ENCODE measurements at regions of chr14 and their contacts with region 1.

Region 1: GRCh38 chr14:100285021-100285912 is 21.0 kb downstream of the SLC25A29 start:
- DNase-seq: peak; percentile 71 to 92 (median 79)
- ATAC-seq: peak; percentile 97
- H3K4me3 ChIP-seq: peak overlapping the region; percentile 71
- H3K4me3 Mint-ChIP-seq: peak overlapping the region; percentile 27 to 91 (median 73)
- H3K27ac ChIP-seq: peak overlapping the region; percentile 85
- H3K27ac Mint-ChIP-seq: peak overlapping the region in 5 of 9 donors; percentile 9 to 87 (median 59)
- H3K4me1 ChIP-seq: peaks cover 0 to 6% of the 10 kb centered on the region in 2 donors
- H3K4me1 Mint-ChIP-seq: peaks cover 2 to 21% (median 8%) of the 10 kb centered on the region in 7 donors
- H3K27me3 ChIP-seq: no peaks in the 10 kb centered on the region
- H3K27me3 Mint-ChIP-seq: no peaks in the 10 kb centered on the region

Region 2: GRCh38 chr14:100213956-100214774 is 71.1 kb before region 1 on chr14:
- CTCF ChIA-PET with region 1: no interaction called
- POLR2A ChIA-PET with region 1: interaction called, 3 read pairs
- intact Hi-C with region 1: loop called in 1 of 2 experiments (anchors 1 kb)
- DNase-seq: peak; percentile 82 to 95 (median 90)
- ATAC-seq: peak; percentile 98
- H3K4me3 ChIP-seq: peak overlapping the region; percentile 90
- H3K4me3 Mint-ChIP-seq: peak overlapping the region; percentile 76 to 89 (median 85)
- H3K27ac ChIP-seq: peak overlapping the region; percentile 97
- H3K27ac Mint-ChIP-seq: peak overlapping the region; percentile 62 to 94 (median 92)
- H3K4me1 ChIP-seq: peaks cover 12 to 19% of the 10 kb centered on the region in 2 donors
- H3K4me1 Mint-ChIP-seq: peaks cover 10 to 39% (median 34%) of the 10 kb centered on the region in 7 donors
- H3K27me3 ChIP-seq: no peaks in the 10 kb centered on the region
- H3K27me3 Mint-ChIP-seq: no peaks in the 10 kb centered on the region

Region 3: GRCh38 chr14:100221533-100222223 is 63.6 kb before region 1 on chr14:
- CTCF ChIA-PET with region 1: interaction called, 3 read pairs
- POLR2A ChIA-PET with region 1: interaction called, 11 read pairs
- intact Hi-C with region 1: no loop called
- DNase-seq: peak; percentile 22 to 81 (median 74)
- ATAC-seq: peak; percentile 95
- H3K4me3 ChIP-seq: peak overlapping the region; percentile 88
- H3K4me3 Mint-ChIP-seq: no peak overlapping the region
- H3K27ac ChIP-seq: peak overlapping the region; percentile 77
- H3K27ac Mint-ChIP-seq: no peak overlapping the region
- H3K4me1 ChIP-seq: peaks cover 31 to 36% of the 10 kb centered on the region in 2 donors
- H3K4me1 Mint-ChIP-seq: peaks cover 11 to 20% (median 13%) of the 10 kb centered on the region in 7 donors
- H3K27me3 ChIP-seq: no peaks in the 10 kb centered on the region
- H3K27me3 Mint-ChIP-seq: no peaks in the 10 kb centered on the region

Region 4: DNA sequence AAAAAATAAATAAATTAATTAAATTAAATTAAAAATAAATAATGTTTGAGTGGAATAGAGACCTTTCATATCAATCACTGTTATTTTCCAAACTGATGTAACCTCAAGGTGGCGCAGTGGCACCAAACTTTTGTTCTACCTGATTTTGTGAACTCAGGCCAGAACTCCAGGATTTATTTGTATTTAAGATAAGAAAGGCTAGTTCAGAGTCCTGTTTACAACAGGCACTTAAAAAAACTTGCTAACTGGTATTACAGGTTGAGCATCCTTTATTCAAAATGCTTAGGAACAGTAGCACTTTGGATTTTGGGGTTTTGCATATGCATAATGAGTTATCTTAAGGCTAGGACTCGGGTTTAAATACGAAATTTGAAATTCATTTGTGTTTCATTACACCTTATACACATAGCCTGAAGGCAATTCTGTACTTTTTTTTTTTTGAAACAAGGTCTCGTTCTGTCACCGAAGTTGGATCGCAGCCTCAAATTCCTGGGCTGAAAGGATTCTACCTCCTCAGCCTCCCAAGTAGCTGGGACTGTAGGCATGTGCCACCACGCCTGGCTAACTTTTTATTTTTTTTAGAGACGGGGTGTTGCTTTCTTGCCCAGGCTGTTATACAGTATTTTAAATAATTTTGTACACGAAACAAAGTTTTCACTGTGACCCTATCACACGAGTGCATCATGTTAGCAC is 13.9 kb before region 1 on chr14:
- CTCF ChIA-PET with region 1: interaction called, 11 read pairs
- POLR2A ChIA-PET with region 1: interaction called, 4 read pairs
- intact Hi-C with region 1: loop called in 1 of 2 experiments (anchors 2 kb)
- DNase-seq: peak in 2 of 9 donors; percentile 22
- ATAC-seq: peak; percentile 32
- H3K4me3 ChIP-seq: no peak overlapping the region
- H3K4me3 Mint-ChIP-seq: no peak overlapping the region
- H3K27ac ChIP-seq: no peak overlapping the region
- H3K27ac Mint-ChIP-seq: peak overlapping the region in 1 of 9 donors; percentile 59
- H3K4me1 ChIP-seq: peaks cover 21 to 34% of the 10 kb centered on the region in 2 donors
- H3K4me1 Mint-ChIP-seq: peaks cover 28 to 81% (median 70%) of the 10 kb centered on the region in 7 donors
- H3K27me3 ChIP-seq: no peaks in the 10 kb centered on the region
- H3K27me3 Mint-ChIP-seq: no peaks in the 10 kb centered on the region

Region 5: DNA sequence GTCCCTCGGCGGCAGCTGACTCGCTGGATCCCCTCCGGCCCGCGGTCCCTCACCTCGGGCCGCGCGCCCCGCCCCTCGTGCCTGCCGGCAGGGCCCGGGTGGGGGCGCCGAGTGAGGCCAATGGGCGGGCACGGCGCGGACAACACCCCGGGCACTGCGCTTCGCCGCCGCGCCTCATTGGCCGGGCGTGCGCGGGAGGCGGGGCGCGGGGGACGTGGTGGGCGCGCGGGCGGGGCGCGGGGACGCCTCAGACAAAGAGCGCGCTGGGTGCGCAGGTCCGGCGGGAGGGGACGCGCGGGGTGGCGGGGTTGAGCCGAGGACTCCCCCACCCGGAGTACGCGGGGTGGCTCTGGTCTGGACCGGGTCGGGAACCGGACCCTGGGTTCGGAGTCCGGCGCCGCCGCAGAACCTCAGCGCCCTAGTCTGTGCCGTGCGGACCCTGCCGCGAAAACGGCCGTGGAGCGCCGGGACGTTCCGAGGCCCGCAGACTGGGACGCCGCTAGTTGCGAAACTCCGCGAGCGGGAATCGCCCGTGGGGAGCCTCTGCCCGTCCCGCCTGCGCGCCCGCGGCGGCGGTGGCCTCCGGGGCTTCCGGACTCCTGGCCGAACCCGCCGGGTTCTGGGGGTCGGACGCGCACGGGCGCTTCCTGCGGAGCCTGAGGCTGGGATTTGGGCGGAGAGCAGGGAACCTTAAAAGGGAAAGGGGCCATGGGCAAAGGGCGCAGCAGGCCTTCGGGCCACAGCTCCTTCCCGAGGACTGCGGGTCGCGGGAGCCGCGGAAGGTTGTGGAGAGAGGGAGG is 21.4 kb after region 1 on chr14 and contains the start of gene SLC25A29:
- CTCF ChIA-PET with region 1: no interaction called
- POLR2A ChIA-PET with region 1: no interaction called
- intact Hi-C with region 1: loop called (anchors 2 kb)
- DNase-seq: peak; percentile 26 to 87 (median 39)
- ATAC-seq: peak; percentile 93
- H3K4me3 ChIP-seq: peak within 1 kb of the TSS; percentile 59
- H3K4me3 Mint-ChIP-seq: peak within 1 kb of the TSS; percentile 83 to 95 (median 88)
- H3K27ac ChIP-seq: peak within 1 kb of the TSS; percentile 51
- H3K27ac Mint-ChIP-seq: peak within 1 kb of the TSS in 4 of 9 donors; percentile 49 to 81 (median 56)
- H3K4me1 ChIP-seq: peaks cover 4 to 7% of the 10 kb centered on the region in 2 donors
- H3K4me1 Mint-ChIP-seq: peaks cover 0 to 24% (median 10%) of the 10 kb centered on the region in 7 donors
- H3K27me3 ChIP-seq: no peaks in the 10 kb centered on the region
- H3K27me3 Mint-ChIP-seq: peaks cover 0 to 39% (median 0%) of the 10 kb centered on the region in 5 donors
- total RNA-seq, gene SLC25A29: 5.9 to 25.6 (median 10.4) TPM

Region 6: GRCh38 chr14:100317912-100318808 is 32.9 kb after region 1 on chr14:
- CTCF ChIA-PET with region 1: interaction called, 3 read pairs
- POLR2A ChIA-PET with region 1: interaction called, 3 read pairs
- intact Hi-C with region 1: loop called in 1 of 2 experiments (anchors 1 kb)
- DNase-seq: peak; percentile 38 to 72 (median 58)
- ATAC-seq: peak; percentile 97
- H3K4me3 ChIP-seq: peak overlapping the region; percentile 53
- H3K4me3 Mint-ChIP-seq: peak overlapping the region; percentile 45 to 79 (median 72)
- H3K27ac ChIP-seq: no peak overlapping the region
- H3K27ac Mint-ChIP-seq: peak overlapping the region in 1 of 9 donors; percentile 9
- H3K4me1 ChIP-seq: no peaks in the 10 kb centered on the region
- H3K4me1 Mint-ChIP-seq: peaks cover 4 to 7% (median 5%) of the 10 kb centered on the region in 7 donors
- H3K27me3 ChIP-seq: no peaks in the 10 kb centered on the region
- H3K27me3 Mint-ChIP-seq: peaks cover 0 to 5% (median 0%) of the 10 kb centered on the region in 5 donors